ENCODE measurements at regions of chr2 and their contacts with region 1.

Region 1: DNA sequence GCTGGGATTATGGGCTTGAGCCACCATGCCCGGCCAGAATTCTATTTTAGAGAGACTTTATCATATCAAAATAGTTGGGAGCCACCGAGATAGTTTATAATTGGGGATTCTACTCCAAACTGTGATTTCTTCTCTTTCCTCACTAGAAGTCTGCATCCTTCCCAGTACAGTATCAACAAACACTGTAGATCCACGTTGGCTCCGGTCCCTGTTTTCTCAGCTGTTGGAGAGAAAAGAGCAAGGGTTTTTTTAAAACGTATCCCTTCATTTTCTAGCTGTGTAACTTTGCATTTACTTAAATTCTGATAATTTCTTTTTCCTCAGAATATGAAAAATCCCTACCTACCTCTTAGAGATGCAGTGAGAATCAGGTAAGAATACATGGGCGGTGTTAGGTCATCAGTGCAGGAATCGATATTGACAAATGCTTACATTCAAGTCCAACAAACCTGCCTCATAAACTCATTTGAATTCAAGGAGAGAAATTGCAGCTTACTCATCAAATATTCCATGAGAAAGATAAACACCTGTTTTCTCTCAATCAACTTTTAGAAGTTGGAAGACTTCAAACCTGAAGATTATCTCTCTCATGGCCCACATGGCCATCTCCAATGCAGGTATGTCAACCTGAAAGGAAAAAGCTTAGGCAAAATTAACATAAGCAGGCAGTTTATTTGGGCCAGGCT is 17.7 kb upstream of the PDCL3 start:
- DNase-seq: no peak
- H3K4me3 ChIP-seq: no peak overlapping the region
- H3K27me3 ChIP-seq: peaks cover 1% of the 10 kb centered on the region
- CTCF ChIP-seq: no peak

Region 2: DNA sequence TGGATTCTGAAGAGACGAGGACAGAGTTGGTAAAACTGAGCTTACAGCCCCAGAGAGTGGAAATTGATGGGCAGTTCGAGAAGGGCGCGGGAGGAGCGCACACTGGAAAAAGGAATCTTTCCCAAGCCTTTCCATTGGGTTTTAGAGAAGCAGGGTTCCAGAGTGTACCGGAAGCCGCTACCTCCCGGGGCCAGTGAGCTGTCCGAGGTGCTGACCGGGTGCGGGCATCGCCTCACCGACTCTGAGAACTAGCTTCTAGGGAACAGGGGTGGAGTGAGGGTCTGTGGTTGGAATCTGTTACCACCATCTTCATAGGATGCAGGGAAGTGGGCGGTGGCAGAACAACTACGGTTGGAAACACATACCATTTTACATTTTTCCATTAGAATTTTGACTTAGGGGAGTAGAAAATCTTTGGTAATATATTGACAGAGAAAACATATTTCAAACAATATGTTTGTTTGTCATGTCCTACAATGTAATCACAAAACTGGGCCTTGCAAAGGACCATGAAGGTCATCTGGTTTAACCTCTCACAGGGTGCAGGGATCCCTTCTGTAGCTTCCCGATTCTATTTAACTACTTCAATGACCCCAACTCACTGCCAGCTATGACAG is 74.0 kb before region 1 on chr2:
- CTCF ChIA-PET with region 1: no interaction called
- POLR2A ChIA-PET with region 1: interaction called, 13 read pairs
- DNase-seq: no peak
- H3K4me3 ChIP-seq: no peak overlapping the region
- H3K27me3 ChIP-seq: peaks cover 1% of the 10 kb centered on the region; the same call in 1 of the 2 replicates
- CTCF ChIP-seq: no peak

Measured in BJ (cell line).